ENCODE measurements at regions of chr5 and their contacts with region 1.

Region 1: GRCh38 chr5:142446131-142446959 is 121.5 kb upstream of the SPRY4 start:
- DNase-seq: peak in 2 of 4 experiments; percentile 26 to 83
- ATAC-seq: peak; percentile 63
- H3K4me3 ChIP-seq: no peak overlapping the region
- H3K27ac ChIP-seq: peak overlapping the region; percentile 79
- H3K4me1 ChIP-seq: peaks cover 5 to 27% of the 10 kb centered on the region in 2 experiments
- H3K27me3 ChIP-seq: no peaks in the 10 kb centered on the region
- CTCF ChIP-seq: no peak
- EP300 ChIP-seq: peak; percentile 32; the same call in 1 of the 2 replicates
- POLR2A ChIP-seq: peak; percentile 37; the same call in 1 of the 2 replicates
- RAD21 ChIP-seq: no peak; a peak in 1 of 4 replicates

Region 2: DNA sequence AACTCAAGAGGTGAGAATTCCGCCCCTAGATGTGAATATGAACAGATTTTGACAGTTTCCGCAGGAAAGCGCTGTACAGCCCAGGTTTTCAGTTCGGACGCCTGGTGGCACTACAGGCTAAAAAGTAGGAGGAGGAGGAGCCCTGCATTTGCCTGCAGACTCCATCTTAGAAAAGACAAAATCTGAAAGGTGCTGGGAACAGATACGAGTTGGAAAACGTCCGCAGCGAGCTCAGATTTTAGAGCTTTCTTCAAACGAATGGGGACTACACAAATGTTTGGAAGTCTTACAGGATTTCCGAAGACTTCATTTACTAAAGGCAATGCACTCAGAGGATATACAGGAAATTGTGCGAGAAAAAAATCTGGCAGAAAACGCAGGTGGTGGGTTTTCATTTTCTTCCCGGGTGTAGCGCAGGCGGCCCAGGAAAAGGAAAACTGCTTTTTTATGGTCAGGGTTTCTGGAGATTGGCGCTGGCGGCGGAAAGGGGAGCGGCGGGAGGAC is 1361.8 kb before region 1 on chr5:
- CTCF ChIA-PET with region 1: no interaction called
- POLR2A ChIA-PET with region 1: no interaction called
- in situ Hi-C with region 1: no loop called
- intact Hi-C with region 1: no loop called
- DNase-seq: peak; percentile 7 to 23 (median 12)
- ATAC-seq: peak; percentile 90
- H3K4me3 ChIP-seq: no peak overlapping the region
- H3K27ac ChIP-seq: no peak overlapping the region
- H3K4me1 ChIP-seq: no peaks in the 10 kb centered on the region
- H3K27me3 ChIP-seq: no peaks in the 10 kb centered on the region
- CTCF ChIP-seq: peak; percentile 33 to 51 (median 50); a peak in 4 of 6 replicates
- EP300 ChIP-seq: no peak
- POLR2A ChIP-seq: no peak
- RAD21 ChIP-seq: peak; percentile 10 to 25; a peak in 1 of 4 replicates

Region 3: DNA sequence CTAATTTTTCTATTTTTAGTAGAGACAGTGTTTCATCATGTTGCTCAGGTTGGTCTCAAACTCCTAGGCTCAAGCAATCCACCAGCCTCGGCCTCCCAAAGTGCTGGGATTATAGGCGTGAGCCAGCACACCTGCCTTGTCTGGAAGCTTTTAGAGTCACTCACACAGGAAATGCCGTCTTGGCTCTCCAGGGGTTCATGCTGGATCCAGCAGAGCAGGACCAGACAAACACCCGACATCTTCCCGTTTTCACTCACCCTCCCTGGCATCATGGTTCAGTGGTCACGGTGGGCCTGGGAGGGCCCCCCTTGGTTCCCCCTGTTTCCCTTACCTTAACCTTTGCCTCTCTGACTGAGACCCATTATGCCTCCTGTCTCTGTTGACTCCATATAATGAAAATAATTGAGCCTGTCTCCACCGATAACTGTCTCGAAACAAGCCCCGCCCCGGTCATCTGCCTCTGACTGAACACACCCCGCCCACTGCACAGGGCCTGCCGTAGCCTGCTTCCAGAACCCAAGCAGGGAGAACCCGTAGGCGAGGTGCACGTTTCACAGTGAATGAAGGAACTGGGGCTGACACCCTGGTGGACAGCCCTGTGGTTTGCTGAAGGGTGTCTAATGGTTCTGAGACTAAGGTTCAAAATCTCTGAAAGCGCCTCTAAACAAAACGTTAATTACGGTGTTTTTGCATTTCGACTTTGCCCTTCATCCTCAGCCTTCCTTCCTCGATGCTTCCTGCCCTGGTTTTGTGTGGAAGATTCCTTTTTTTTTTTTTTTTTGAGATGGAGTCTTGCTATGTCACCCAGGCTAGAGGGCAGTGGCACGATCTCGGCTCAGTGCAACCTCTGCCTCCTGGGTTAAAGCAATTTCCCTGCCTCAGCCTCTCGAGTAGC is 81.8 kb before region 1 on chr5:
- CTCF ChIA-PET with region 1: no interaction called
- POLR2A ChIA-PET with region 1: no interaction called
- in situ Hi-C with region 1: no loop called
- intact Hi-C with region 1: loop called (anchors 5 kb)
- DNase-seq: peak; percentile 62 to 85 (median 71)
- ATAC-seq: peak; percentile 93
- H3K4me3 ChIP-seq: no peak overlapping the region
- H3K27ac ChIP-seq: peak overlapping the region; percentile 35; the same call in 2 of the 3 replicates
- H3K4me1 ChIP-seq: peaks cover 19 to 42% of the 10 kb centered on the region in 2 experiments
- H3K27me3 ChIP-seq: no peaks in the 10 kb centered on the region
- CTCF ChIP-seq: no peak
- EP300 ChIP-seq: 0 out of 2 replicates have a peak, but pooled peaks have one; percentile 13
- POLR2A ChIP-seq: 0 out of 2 replicates have a peak, but pooled peaks have one; percentile 46
- RAD21 ChIP-seq: no peak

Region 4: GRCh38 chr5:142472300-142472951 is 26.1 kb after region 1 on chr5:
- CTCF ChIA-PET with region 1: no interaction called
- POLR2A ChIA-PET with region 1: interaction called, 5 read pairs
- in situ Hi-C with region 1: no loop called
- intact Hi-C with region 1: loop called (anchors 2 kb)
- DNase-seq: peak; percentile 40 to 79 (median 64)
- ATAC-seq: peak; percentile 98
- H3K4me3 ChIP-seq: no peak overlapping the region
- H3K27ac ChIP-seq: peak overlapping the region; percentile 84
- H3K4me1 ChIP-seq: peaks cover 0 to 16% of the 10 kb centered on the region in 2 experiments; a peak in 3 of 5 replicates
- H3K27me3 ChIP-seq: no peaks in the 10 kb centered on the region
- CTCF ChIP-seq: no peak
- EP300 ChIP-seq: peak; percentile 94
- POLR2A ChIP-seq: no peak
- RAD21 ChIP-seq: peak in 1 of 2 experiments; percentile 38; a peak in 2 of 4 replicates